A673 (cell line): ENCODE measurements at regions of chr9 and their contacts with region 1.

Region 1: DNA sequence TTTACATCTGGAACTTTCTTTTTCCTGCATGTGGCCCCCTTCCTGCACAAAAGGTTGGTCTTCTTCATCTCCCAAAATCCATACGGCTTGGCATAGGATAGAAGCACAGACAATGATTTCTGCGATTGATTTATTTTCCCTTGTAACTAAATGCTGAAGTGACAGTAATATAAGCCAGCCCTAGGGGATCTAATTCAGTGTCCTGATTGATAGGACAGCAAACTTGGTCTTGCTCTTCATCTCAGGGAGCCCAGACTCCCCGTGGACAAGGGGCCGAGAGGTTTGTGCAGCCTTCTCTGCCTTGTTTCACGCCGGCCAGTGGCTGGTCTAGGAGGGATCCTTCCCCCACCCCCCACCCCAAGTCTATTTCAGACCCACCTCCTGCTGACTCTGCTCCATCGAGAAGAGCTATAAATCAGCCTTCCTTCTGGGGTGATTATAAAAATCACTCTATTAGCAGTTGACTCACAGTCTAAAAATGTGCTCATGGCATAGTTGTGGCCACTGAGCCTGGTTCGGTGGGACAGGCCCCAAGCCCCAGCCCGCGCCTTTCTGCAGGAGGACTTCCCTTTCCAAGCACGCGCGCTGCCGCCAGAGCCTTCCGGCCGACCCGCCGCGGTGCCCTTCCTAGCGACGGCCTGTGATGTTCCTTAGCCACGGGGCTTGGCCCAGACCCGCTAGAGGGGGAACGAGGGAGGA is 89.8 kb upstream of the COL5A1 start:
- DNase-seq: peak; percentile 94
- H3K4me3 ChIP-seq: no peak overlapping the region
- H3K27ac ChIP-seq: peak overlapping the region; percentile 78
- H3K4me1 ChIP-seq: peaks cover 38% of the 10 kb centered on the region
- H3K27me3 ChIP-seq: no peaks in the 10 kb centered on the region
- CTCF ChIP-seq: no peak

Region 2: GRCh38 chr9:134455934-134456739 is 95.7 kb before region 1 on chr9:
- CTCF ChIA-PET with region 1: no interaction called
- POLR2A ChIA-PET with region 1: no interaction called
- intact Hi-C with region 1: loop called (anchors 5 kb)
- DNase-seq: peak; percentile 94
- H3K4me3 ChIP-seq: no peak overlapping the region
- H3K27ac ChIP-seq: peak overlapping the region; percentile 96
- H3K4me1 ChIP-seq: peaks cover 21% of the 10 kb centered on the region
- H3K27me3 ChIP-seq: no peaks in the 10 kb centered on the region
- CTCF ChIP-seq: no peak